MCF 10A (cell line): ENCODE measurements at regions of chr18 and their contacts with region 1.

Region 1: GRCh38 chr18:55589625-55590291 is 1.8 kb upstream of the TCF4 start:
- DNase-seq: peak; percentile 94
- H3K4me3 Mint-ChIP-seq: peak overlapping the region; percentile 88
- H3K27ac Mint-ChIP-seq: peak overlapping the region; percentile 96
- H3K4me1 Mint-ChIP-seq: peaks cover 17% of the 10 kb centered on the region
- H3K27me3 Mint-ChIP-seq: no peaks in the 10 kb centered on the region
- CTCF ChIP-seq: no peak

Region 2: DNA sequence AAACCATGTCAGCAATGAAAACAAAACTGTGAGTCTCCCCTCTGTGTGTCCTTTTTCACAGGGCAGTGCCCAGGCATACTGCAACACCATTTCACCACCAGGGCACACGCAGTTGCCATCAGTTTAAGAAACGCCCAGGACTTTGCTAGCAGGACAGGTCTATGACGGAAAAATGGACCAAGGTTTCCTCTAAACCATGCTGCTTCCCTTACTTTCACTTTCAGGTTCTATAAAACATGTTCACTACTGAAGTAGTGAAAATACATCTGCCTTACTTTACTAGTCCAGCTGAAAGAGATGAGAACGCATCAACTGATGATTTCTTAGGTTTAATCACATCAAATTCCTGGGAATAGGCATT is 112.3 kb before region 1 on chr18:
- CTCF ChIA-PET with region 1: interaction called, 3 read pairs
- POLR2A ChIA-PET with region 1: no interaction called
- intact Hi-C with region 1: loop called (anchors 5 kb)
- DNase-seq: peak; percentile 61
- H3K4me3 Mint-ChIP-seq: peak overlapping the region; percentile 74
- H3K27ac Mint-ChIP-seq: peak overlapping the region; percentile 79
- H3K4me1 Mint-ChIP-seq: peaks cover 12% of the 10 kb centered on the region
- H3K27me3 Mint-ChIP-seq: no peaks in the 10 kb centered on the region
- CTCF ChIP-seq: no peak

Region 3: GRCh38 chr18:55856229-55856628 is 266.5 kb after region 1 on chr18:
- CTCF ChIA-PET with region 1: no interaction called
- POLR2A ChIA-PET with region 1: interaction called, 14 read pairs
- intact Hi-C with region 1: loop called (anchors 2 kb)
- DNase-seq: peak; percentile 97
- H3K4me3 Mint-ChIP-seq: no peak overlapping the region
- H3K27ac Mint-ChIP-seq: peak overlapping the region; percentile 64
- H3K4me1 Mint-ChIP-seq: peaks cover 35% of the 10 kb centered on the region
- H3K27me3 Mint-ChIP-seq: no peaks in the 10 kb centered on the region
- CTCF ChIP-seq: no peak